ENCODE measurements at regions of chr11 and their contacts with region 1.

Region 1: DNA sequence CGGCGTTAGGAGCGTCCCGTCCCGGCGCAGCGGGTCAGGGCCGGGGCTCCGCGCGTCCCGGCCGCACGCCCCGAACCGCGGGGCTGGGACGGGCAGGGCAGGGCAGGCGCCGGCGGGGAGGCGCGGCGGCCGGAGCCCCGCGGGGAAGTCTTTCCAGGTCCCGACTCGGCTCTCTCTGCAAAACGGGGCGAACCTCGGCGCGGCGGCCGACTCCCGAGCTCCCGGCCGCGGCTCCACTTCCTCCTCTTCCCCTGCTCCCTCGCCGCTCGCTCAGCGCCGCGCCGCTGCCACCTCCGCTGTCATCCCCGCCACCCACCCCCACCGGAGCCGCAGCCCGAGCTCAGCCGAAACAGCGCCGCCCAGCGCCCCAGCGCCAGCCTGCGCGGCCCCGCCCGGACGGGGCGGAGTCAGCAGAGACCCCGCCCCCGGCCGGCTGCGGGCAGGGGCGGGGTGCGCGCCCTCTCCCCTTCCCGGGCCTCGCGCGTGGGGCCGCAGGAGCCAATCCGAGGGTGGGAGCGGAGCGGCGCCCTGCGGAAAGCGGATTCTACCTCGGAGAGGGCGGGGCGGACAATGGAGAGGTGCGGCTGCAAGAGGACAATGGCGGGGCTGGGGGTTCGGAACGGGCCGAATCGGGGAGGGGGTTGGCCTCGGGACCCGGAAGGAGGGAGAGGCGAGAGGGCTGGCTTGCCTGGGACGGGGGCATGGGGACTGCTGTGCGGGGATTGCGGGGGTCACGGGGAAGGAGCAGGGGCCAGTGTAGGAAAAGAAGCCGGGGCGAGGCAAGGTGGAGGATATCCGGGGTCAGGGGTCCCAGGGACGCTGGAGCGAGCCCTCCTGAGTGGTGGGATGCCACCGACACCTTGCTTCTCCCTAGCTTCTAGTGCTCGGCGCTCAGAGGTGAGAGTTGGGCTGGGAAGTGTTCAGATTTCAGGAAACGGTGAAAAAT is at the start of gene GDPD5:
- DNase-seq: no peak
- H3K4me3 ChIP-seq: peak within 1 kb of the TSS; percentile 89
- H3K27me3 ChIP-seq: peaks cover 15% of the 10 kb centered on the region; the same call in 1 of the 2 replicates
- CTCF ChIP-seq: peak; percentile 27; the same call in 1 of the 2 replicates
- polyA plus RNA-seq, gene GDPD5: 5.0 and 7.7 TPM in 2 replicates

Region 2: GRCh38 chr11:75371941-75372789 is 153.7 kb before region 1 on chr11:
- CTCF ChIA-PET with region 1: no interaction called
- POLR2A ChIA-PET with region 1: no interaction called
- DNase-seq: no peak
- H3K4me3 ChIP-seq: no peak overlapping the region
- H3K27me3 ChIP-seq: peaks cover 5% of the 10 kb centered on the region
- CTCF ChIP-seq: no peak

Region 3: GRCh38 chr11:75474878-75475766 is 50.7 kb before region 1 on chr11:
- CTCF ChIA-PET with region 1: no interaction called
- POLR2A ChIA-PET with region 1: interaction called, 12 read pairs
- DNase-seq: no peak
- H3K4me3 ChIP-seq: no peak overlapping the region
- H3K27me3 ChIP-seq: no peaks in the 10 kb centered on the region
- CTCF ChIP-seq: no peak

Region 4: GRCh38 chr11:75579841-75580240 is 54.0 kb after region 1 on chr11:
- CTCF ChIA-PET with region 1: no interaction called
- POLR2A ChIA-PET with region 1: no interaction called
- DNase-seq: no peak
- H3K4me3 ChIP-seq: no peak overlapping the region
- H3K27me3 ChIP-seq: no peaks in the 10 kb centered on the region
- CTCF ChIP-seq: no peak

Region 5: DNA sequence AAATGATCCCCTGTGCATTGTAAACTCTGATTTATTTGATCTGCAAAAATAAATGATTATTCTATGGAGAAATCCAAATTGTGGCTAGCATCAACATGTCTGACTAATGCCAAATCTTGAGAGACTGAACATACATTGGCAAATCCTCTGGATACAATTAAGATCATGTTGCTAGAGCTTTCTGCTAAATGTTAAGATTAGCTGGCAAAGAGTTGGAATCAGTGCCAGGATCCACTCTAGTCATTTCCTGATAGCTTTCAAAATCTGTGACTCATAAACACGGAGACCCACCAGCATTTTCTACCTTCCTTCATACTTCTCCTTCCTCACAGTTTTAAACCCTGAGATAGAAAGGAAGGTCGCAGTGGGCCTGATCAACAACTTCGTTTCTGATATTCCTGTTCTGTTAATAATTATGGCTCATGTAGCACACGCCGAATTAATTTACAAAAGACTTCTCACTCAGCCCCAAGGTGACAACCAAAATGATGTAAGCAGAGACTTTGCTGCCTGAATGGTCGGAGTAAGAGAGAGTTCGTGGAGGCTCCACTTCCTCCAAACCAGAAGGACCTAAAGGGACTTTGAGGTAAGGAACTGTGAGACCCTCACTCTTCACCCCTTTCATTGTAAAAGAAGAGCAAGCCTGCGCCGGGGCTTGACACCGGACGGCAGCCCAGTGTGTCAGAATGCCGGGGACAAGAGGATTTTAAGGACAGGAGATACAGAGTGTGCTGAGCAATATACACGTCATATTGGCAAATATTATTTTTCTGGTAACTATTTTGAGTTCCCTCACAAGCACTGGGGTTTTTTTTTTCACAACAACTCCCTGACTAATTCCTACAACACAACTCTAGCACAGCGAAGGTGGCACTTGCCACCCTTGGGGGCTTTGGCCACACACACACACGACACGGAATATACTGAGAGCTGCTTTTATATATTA is 78.2 kb after region 1 on chr11:
- CTCF ChIA-PET with region 1: no interaction called
- POLR2A ChIA-PET with region 1: no interaction called
- DNase-seq: peak; percentile 59
- H3K4me3 ChIP-seq: no peak overlapping the region
- H3K27me3 ChIP-seq: no peaks in the 10 kb centered on the region
- CTCF ChIP-seq: no peak

Measured in BJ (cell line).